A673 (cell line): ENCODE measurements at regions of chr12 and their contacts with region 1.

Region 1: DNA sequence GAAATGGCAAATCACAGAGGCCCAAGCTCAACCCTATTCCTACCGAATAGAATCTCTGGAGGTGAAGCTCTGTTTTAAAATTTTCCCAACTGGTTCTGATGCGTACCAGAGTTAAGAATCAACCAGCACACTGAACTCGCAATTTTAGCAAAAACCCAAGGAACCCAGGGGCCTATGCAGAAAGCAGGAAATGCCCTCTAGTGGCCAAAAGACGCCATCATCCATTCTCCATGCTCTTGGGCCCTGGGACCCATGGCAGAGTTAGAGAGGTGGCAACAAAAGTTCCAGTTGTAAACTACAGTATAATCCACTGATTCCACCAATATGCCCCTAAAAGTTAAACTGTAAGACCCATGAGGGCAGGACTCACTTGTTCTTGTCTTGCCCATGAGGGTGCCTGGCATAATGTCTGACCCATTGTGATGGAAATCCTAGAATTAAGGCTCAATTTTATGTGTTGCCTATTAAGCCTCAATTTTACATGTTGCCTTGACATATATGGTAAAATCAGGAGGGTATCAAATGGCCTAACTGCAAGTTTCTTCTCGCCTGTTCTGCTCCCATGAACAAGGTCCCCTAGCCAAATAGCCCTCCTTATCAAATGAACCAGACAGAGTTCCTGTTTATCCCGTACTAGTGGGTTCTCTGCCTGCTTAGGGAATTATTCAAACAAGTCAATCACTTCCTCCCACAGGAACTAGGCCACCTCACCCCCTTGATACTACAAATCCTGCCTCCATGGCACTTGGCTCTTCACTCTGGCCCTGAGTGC is 137.5 kb upstream of the CPM start:
- DNase-seq: peak; percentile 79
- H3K4me3 ChIP-seq: no peak overlapping the region
- H3K27ac ChIP-seq: no peak overlapping the region
- H3K4me1 ChIP-seq: peaks cover 12% of the 10 kb centered on the region
- H3K27me3 ChIP-seq: no peaks in the 10 kb centered on the region
- CTCF ChIP-seq: peak; percentile 93

Region 2: DNA sequence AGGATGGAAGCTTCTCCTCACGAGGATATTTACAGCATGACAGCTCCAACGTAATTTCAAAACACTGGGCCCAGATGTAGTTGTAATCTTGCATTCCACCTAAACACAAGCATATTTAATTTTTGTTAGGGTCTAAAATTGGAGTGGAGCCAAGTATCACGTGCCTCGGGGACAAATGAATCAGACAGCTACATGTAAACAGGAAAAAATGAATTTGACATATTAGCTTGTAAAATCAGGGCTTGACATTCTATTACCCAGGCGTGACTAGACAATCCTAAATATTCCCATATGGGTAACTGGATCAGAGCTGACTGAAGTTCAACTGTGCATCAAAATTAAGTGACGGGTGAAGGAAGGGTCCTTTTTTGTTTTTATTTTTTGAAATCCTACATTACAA is 203.6 kb before region 1 on chr12:
- CTCF ChIA-PET with region 1: no interaction called
- POLR2A ChIA-PET with region 1: no interaction called
- intact Hi-C with region 1: loop called (anchors 2 kb)
- DNase-seq: peak; percentile 7
- H3K4me3 ChIP-seq: no peak overlapping the region
- H3K27ac ChIP-seq: no peak overlapping the region
- H3K4me1 ChIP-seq: no peaks in the 10 kb centered on the region
- H3K27me3 ChIP-seq: no peaks in the 10 kb centered on the region
- CTCF ChIP-seq: no peak